Esophagus squamous epithelium (tissue), 5 donors: ENCODE measurements at regions of chr11 and their contacts with region 1.

Region 1: DNA sequence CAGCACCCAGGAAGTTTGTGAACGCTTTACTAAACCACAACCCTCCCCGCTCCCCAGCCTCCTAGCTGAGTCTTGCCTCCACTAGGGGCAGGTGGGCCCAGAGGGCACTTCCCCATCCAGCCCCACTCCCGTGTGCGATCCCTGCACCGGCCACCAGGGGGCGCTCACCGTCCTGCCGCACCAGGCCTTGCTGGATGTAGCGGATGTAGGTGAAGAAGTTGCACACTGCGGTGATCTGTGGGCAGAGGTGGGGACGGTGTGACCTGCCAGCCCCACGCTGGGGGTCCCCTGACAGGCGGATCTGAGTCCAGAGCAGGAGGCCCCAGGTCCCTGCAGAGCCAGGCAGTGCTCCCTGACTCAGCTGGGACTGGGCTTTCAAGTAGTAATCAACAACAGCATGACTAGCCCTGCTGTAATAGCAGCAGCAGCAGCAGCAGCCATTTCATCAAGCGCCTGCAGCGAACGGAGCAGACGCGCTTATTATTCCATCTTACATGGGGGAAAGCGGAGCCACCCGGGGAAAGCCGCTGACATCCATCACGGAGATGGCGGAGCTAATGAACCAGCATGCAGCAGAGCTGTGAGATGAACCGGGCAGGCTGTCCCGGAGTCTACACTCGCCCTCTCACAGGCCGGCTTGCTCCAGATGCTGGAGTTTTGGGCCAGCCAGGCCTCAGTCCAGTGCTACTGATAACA is 7.9 kb upstream of the FADS3 start:
- DNase-seq: peak; percentile 49
- H3K4me3 ChIP-seq: no peak overlapping the region
- H3K27ac ChIP-seq: peak overlapping the region in 2 of 4 donors; percentile 16 to 34
- H3K4me1 ChIP-seq: peaks cover 0 to 21% (median 0%) of the 10 kb centered on the region in 3 donors
- H3K27me3 ChIP-seq: peaks cover 0 to 4% (median 0%) of the 10 kb centered on the region in 4 donors
- CTCF ChIP-seq: peak; percentile 98 to 100 (median 100)
- POLR2A ChIP-seq: no peak

Region 2: DNA sequence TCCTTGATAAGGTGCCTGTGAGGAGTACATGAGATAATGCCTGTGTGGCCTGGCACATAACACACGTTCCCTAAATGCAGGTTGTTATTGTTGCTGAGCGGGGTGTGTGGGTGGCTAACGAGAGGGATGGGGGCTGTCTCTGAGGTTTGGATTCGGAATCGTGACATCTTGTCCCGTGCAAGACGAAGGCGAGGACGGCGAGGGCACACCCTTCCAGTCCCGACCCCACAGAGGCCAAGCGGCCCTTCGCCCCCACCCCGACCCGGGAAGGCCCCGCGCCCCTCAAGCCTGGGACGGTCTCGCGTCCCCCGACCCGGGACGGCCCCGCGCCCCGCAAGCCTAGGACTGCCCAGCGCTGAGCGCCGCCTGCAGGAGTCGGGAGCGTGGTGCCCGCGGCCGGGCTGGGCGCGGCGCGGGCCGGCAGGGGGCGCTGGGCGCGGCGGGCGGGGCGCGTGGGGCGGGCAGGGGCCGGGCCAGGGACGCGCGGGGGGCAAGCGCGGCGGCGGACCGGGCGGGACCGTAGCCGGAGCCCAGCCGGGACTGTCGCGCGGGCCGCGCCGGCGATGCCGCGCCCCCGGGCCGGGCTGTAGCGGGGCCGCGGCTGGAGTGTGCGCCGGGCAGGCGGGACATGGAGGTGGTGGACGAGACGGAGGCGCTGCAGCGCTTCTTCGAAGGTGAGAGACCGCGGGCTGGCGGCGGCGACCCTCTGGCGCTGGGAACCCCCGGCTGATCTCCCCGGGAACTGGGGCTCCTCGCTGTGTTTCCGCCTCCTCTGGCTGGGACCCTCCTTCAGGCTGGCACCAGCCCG is 147.0 kb before region 1 on chr11 and contains the start of gene MYRF:
- intact Hi-C with region 1: no loop called
- DNase-seq: no peak
- H3K4me3 ChIP-seq: peak within 1 kb of the TSS; percentile 20 to 71 (median 44)
- H3K27ac ChIP-seq: no peak within 1 kb of the TSS
- H3K4me1 ChIP-seq: peaks cover 4 to 34% (median 17%) of the 10 kb centered on the region in 3 donors
- H3K27me3 ChIP-seq: peaks cover 0 to 49% (median 0%) of the 10 kb centered on the region in 4 donors
- CTCF ChIP-seq: peak in 5 of 6 experiments; percentile 26 to 65 (median 49)
- POLR2A ChIP-seq: no peak
- total RNA-seq, gene MYRF: 0.09 to 0.95 (median 0.22) TPM in 3 of 4 donors, not detected in the other

Region 3: GRCh38 chr11:61792310-61793085 is 106.8 kb before region 1 on chr11 and contains the starts of genes FEN1 and TMEM258:
- intact Hi-C with region 1: no loop called
- DNase-seq: peak; percentile 62
- H3K4me3 ChIP-seq: peak within 1 kb of the TSS; percentile 49 to 89 (median 76)
- H3K27ac ChIP-seq: peak within 1 kb of the TSS; percentile 89 to 99 (median 95)
- H3K4me1 ChIP-seq: peaks cover 12 to 44% (median 20%) of the 10 kb centered on the region in 3 donors
- H3K27me3 ChIP-seq: no peaks in the 10 kb centered on the region
- CTCF ChIP-seq: peak in 3 of 6 experiments; percentile 3 to 29 (median 27)
- POLR2A ChIP-seq: peak in 2 of 4 donors; percentile 36 to 69
- total RNA-seq, gene FEN1: 11.4 to 38.1 (median 23.5) TPM
- total RNA-seq, gene TMEM258: 32.3 to 54.2 (median 37.9) TPM

Region 4: GRCh38 chr11:62054484-62055121 is 155.3 kb after region 1 on chr11:
- intact Hi-C with region 1: loop called (anchors 2 kb)
- DNase-seq: no peak
- H3K4me3 ChIP-seq: no peak overlapping the region
- H3K27ac ChIP-seq: no peak overlapping the region
- H3K4me1 ChIP-seq: peaks cover 0 to 20% (median 0%) of the 10 kb centered on the region in 3 donors
- H3K27me3 ChIP-seq: peaks cover 0 to 22% (median 0%) of the 10 kb centered on the region in 4 donors
- CTCF ChIP-seq: peak in 5 of 6 experiments; percentile 36 to 75 (median 47)
- POLR2A ChIP-seq: no peak

Region 5: DNA sequence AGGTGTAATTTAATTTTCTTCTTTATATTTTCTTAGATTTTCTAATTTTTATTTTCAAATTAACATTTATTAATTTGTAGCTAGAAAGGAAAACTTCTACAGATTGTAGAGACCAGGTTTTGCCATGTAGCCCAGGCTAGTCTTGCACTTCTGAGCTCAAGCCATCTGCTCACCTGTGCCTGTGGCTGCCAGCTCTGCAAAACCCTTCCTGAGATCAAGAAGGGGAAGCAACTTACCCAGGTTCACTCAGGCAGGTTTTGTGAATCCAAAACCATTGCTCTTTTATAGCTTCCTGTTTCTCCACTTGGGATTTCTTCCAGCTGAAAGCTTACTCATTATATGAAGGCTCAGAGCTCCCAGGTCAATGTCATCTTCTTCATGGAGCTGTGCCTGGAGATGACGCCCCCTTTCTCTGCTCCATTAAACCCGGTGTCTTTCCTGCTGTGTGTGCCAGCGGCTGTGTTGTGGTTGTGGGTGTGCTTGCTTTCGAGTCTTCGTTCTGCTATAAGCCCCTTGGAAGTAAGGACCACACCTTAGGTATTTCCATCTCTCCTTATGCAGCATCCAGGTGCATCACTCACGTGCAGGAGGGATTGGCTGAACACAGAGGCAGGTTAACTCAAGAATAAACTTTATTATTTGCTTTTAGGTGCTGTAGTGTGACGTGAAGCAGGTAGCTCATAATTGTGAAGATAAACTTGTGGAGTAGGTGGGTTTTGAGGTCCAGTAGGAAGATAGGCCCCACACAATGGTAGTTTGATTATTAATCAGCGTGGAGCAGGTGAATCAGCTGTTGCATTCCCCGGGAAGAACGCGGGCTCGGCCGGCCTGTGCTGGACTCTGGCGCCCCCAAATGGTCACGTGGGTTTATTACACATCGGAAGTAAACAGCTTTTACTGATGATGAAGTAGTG is 182.3 kb after region 1 on chr11:
- intact Hi-C with region 1: loop called (anchors 5 kb)
- DNase-seq: no peak
- H3K4me3 ChIP-seq: no peak overlapping the region
- H3K27ac ChIP-seq: no peak overlapping the region
- H3K4me1 ChIP-seq: peaks cover 0 to 8% (median 0%) of the 10 kb centered on the region in 3 donors
- H3K27me3 ChIP-seq: no peaks in the 10 kb centered on the region
- CTCF ChIP-seq: peak; percentile 84 to 94 (median 89)
- POLR2A ChIP-seq: no peak